Activated CD8-positive, alpha-beta T cell treated with anti-CD3 and anti-CD28 coated beads for 36 hours (primary cell): ENCODE measurements at regions of chr9 and their contacts with region 1.

Region 1: GRCh38 chr9:77884395-77884851 is 147.2 kb downstream of the GNAQ start:
- DNase-seq: no peak
- ATAC-seq: no peak
- H3K4me3 Mint-ChIP-seq: no peak overlapping the region
- H3K27ac Mint-ChIP-seq: no peak overlapping the region
- H3K4me1 Mint-ChIP-seq: peaks cover 19% of the 10 kb centered on the region
- H3K27me3 Mint-ChIP-seq: no peaks in the 10 kb centered on the region
- CTCF ChIP-seq: no peak

Region 2: GRCh38 chr9:77833561-77834429 is 50.6 kb before region 1 on chr9:
- CTCF ChIA-PET with region 1: no interaction called
- POLR2A ChIA-PET with region 1: no interaction called
- intact Hi-C with region 1: no loop called
- DNase-seq: no peak
- ATAC-seq: no peak
- H3K4me3 Mint-ChIP-seq: no peak overlapping the region
- H3K27ac Mint-ChIP-seq: no peak overlapping the region
- H3K4me1 Mint-ChIP-seq: peaks cover 27% of the 10 kb centered on the region
- H3K27me3 Mint-ChIP-seq: no peaks in the 10 kb centered on the region
- CTCF ChIP-seq: no peak

Region 3: DNA sequence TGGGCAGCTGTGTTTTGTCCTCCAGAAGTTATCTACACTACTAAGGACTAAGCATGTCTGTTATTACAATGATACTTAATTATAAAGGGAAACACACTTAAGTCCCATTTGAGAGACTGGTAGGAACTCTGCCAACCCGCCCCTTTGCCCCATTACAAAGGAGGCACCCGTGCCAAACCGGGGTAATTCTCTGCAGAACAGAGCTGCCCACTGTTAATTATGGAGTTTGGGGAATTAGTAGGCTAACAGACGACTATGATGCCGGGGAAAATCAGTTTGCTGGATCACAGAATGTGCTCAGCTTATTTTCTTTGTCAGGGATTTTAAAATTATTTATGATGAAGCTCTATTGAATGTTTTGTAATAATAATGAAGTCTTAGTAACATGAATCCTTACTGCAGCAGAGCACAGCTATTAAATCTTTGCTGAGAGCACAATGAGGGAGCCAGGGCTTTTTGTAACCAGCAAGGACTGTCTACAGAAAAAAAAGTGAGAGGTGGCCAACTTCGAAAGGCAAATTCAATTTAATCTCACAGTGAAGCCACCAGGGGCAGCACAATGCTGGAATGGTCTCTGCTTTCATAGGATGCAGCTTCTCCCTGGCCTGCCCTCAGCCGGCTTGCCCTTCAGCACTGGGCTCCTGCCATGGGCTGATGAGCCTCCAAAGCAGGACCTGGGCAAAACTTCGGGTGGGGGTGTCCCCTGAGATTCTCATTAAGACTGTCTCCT is 12.7 kb after region 1 on chr9:
- CTCF ChIA-PET with region 1: interaction called, 10 read pairs
- POLR2A ChIA-PET with region 1: no interaction called
- intact Hi-C with region 1: no loop called
- DNase-seq: no peak
- ATAC-seq: no peak
- H3K4me3 Mint-ChIP-seq: no peak overlapping the region
- H3K27ac Mint-ChIP-seq: no peak overlapping the region
- H3K4me1 Mint-ChIP-seq: peaks cover 22% of the 10 kb centered on the region
- H3K27me3 Mint-ChIP-seq: no peaks in the 10 kb centered on the region
- CTCF ChIP-seq: no peak

Region 4: DNA sequence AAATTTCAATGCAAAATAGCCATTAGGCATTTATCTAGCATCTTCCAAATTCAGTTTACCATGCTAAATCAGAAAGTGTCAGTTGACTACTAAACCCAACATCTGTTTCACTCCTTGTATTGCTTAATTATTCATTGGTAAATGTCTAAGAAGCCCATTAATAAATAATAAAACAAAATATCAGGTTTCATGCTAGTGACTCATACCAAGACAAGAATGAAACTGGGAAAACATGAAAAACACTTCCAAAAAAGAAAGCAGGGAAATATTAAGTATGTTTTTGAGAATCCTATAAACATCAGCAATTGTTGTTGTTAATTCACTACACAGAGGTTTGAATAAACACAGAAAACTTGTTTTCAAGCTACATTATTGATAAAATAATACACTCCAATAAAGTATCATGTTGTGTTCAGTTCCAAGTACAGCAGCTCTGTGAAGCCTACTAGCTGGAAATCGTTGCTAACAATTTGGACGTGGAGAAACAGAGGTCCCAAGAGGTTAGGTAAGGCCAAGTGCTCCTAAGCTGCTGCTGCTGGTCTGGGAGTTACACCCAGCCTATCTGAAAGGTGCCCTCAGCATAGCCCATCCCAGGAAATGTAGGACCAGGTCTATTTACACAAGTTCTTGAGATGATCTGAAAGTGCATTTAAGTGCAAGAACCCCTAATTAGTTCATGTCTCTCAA is 68.4 kb after region 1 on chr9:
- CTCF ChIA-PET with region 1: no interaction called
- POLR2A ChIA-PET with region 1: no interaction called
- intact Hi-C with region 1: no loop called
- DNase-seq: no peak
- ATAC-seq: no peak
- H3K4me3 Mint-ChIP-seq: no peak overlapping the region
- H3K27ac Mint-ChIP-seq: no peak overlapping the region
- H3K4me1 Mint-ChIP-seq: peaks cover 32% of the 10 kb centered on the region
- H3K27me3 Mint-ChIP-seq: no peaks in the 10 kb centered on the region
- CTCF ChIP-seq: no peak

Region 5: DNA sequence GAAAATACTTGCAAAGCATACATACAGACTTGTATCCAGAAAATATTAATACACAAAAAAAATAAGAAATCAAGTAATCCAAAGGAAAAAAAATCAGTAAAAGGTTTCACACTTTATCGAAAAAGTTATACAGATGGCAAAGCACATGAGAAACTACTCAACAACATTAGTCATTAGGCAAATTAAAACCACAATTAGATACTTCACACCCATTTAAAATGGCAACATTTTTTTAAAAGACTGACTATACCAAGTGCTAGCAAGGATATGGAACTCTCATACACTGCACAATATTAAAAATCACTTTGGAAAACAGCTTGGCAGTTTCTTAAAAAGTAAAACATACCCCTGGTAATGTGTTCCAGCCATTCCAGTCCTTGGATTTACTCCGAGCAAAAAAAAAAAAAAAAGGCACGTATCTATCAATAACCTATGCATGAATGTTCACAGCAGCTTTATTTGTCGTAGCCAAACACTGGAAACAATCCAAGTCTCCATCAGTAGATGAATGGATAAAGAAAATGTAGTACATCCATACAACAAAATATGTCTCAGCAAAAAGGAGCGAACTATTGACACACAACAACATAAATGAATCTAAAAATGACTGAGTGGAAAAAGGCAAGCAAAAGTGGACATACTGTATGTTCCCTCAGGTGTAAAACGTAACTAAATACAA is 81.2 kb after region 1 on chr9:
- CTCF ChIA-PET with region 1: no interaction called
- POLR2A ChIA-PET with region 1: no interaction called
- intact Hi-C with region 1: no loop called
- DNase-seq: no peak
- ATAC-seq: peak; percentile 42
- H3K4me3 Mint-ChIP-seq: no peak overlapping the region
- H3K27ac Mint-ChIP-seq: no peak overlapping the region
- H3K4me1 Mint-ChIP-seq: peaks cover 50% of the 10 kb centered on the region
- H3K27me3 Mint-ChIP-seq: no peaks in the 10 kb centered on the region
- CTCF ChIP-seq: no peak